ENCODE measurements at regions of chr12 and their contacts with region 1.

Region 1: GRCh38 chr12:103947871-103948555 is 17.7 kb upstream of the TDG start:
- DNase-seq: no peak
- ATAC-seq: no peak
- H3K4me3 ChIP-seq: no peak overlapping the region
- H3K27ac ChIP-seq: no peak overlapping the region
- H3K4me1 ChIP-seq: no peaks in the 10 kb centered on the region
- H3K27me3 ChIP-seq: no peaks in the 10 kb centered on the region
- CTCF ChIP-seq: no peak

Region 2: DNA sequence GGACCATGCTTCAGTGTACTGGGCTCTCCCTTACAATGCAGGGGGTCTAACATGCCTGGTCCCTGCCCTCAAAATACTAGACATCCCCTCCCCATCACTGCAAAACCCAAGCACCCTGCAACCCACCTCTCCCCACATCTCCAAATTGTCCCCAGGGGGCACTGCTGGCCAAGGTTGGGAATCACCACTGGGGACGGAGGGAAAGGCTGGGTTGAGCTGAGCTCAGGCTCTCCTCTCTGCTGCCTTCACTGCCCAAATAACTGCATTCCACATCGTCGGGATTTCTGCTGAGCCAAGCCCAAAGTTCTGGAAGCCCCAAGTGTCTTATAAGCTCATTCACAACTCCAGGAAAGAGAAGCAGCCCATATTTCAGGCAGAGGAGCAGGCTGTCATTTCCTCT is 176.5 kb before region 1 on chr12:
- CTCF ChIA-PET with region 1: no interaction called
- POLR2A ChIA-PET with region 1: no interaction called
- intact Hi-C with region 1: loop called (anchors 10 kb)
- DNase-seq: peak; percentile 72
- ATAC-seq: peak; percentile 91
- H3K4me3 ChIP-seq: no peak overlapping the region
- H3K27ac ChIP-seq: no peak overlapping the region
- H3K4me1 ChIP-seq: no peaks in the 10 kb centered on the region
- H3K27me3 ChIP-seq: no peaks in the 10 kb centered on the region
- CTCF ChIP-seq: peak; percentile 85

Measured in PC-3 (cell line).